Activated naive CD4-positive, alpha-beta T cell treated with anti-CD3 and anti-CD28 coated beads for 36 hours (primary cell): ENCODE measurements at regions of chr19 and their contacts with region 1.

Region 1: DNA sequence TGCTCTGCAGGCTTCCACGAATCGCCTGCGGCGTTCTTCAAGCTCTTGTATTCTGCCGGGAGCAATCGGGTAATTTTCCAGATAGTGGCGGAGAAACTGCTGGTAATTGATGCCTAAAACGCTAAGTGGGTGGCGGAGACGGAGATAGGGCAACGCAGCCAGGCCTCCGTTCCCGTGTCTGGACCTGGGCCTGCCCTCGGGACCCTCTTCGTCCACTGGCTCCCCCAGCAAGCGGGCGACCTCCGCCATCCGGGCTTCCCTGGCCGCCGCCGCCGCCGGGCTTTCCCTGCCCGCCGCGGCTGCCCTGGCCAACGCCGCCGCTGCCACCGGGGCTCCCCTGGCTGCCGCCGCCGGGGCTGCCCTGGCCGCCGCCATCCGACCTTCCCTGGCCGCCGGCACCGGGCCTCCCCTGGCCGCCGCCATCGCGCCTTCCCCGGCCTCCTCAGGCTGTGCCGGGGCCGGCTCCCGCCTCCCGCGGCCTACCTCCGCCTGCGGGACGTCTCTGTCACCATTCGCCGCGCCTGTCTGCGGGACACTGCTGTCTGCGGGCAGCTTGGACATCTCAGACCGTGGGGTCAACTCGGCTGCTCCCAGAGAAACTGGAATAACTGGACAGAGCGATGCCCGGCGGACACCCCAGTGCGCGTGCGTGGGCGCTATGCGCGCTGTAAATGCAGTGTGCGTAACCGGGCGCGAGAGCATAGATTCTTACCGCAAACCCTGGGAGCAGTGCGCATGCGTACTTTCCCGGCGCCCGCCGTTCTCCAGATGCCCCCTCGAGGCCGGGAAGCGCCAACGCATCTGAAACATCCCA is at the start of gene EID2:
- DNase-seq: peak; percentile 97
- H3K4me3 Mint-ChIP-seq: peak within 1 kb of the TSS; percentile 93
- H3K27ac Mint-ChIP-seq: peak within 1 kb of the TSS; percentile 97
- H3K4me1 Mint-ChIP-seq: peaks cover 61% of the 10 kb centered on the region
- H3K27me3 Mint-ChIP-seq: no peaks in the 10 kb centered on the region
- total RNA-seq, gene EID2: 7.7 to 9.1 TPM

Region 2: DNA sequence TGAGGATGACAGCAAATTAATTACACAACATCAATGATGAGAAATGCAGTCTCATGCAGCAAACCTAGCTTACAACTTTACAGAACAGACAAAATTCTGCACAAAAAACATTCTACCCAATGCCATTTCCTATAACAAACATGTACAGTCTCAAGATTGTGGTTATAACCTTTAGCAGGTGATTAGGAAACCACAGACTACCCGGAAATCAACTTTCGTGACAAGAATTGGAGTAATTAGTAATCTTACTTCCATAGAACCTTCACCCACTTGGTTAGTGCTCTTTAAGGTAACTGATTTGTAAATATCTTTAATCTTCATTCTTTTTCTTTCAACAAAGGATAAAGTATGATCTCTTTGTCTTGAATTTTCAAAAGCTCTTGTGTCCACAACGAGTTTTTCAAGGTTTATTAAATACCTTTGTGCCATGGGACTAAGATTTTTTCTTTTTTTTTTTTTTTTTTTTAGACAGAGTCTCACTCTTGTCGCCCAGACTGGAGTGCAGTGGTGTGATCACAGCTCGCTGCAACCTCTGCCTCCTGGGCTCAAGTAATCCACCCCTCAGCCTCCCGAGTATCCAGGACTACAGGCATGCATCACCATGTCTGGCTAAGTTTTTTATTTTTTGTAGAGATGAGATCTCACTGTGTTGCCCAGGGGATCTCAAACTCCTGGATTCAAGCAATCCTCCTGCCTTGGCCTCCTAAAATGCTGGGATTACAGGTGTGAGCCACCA is 1000.8 kb before region 1 on chr19:
- CTCF ChIA-PET with region 1: no interaction called
- intact Hi-C with region 1: no loop called
- DNase-seq: peak; percentile 61
- H3K4me3 Mint-ChIP-seq: peak overlapping the region; percentile 14
- H3K27ac Mint-ChIP-seq: peak overlapping the region; percentile 85
- H3K4me1 Mint-ChIP-seq: peaks cover 35% of the 10 kb centered on the region
- H3K27me3 Mint-ChIP-seq: no peaks in the 10 kb centered on the region

Region 3: GRCh38 chr19:39335168-39335548 is 204.6 kb before region 1 on chr19:
- CTCF ChIA-PET with region 1: no interaction called
- intact Hi-C with region 1: loop called (anchors 5 kb)
- DNase-seq: peak; percentile 57
- H3K4me3 Mint-ChIP-seq: peak overlapping the region; percentile 95
- H3K27ac Mint-ChIP-seq: peak overlapping the region; percentile 99
- H3K4me1 Mint-ChIP-seq: peaks cover 65% of the 10 kb centered on the region
- H3K27me3 Mint-ChIP-seq: no peaks in the 10 kb centered on the region

Region 4: GRCh38 chr19:39557441-39558151 is 17.9 kb after region 1 on chr19:
- CTCF ChIA-PET with region 1: no interaction called
- intact Hi-C with region 1: no loop called
- DNase-seq: no peak
- H3K4me3 Mint-ChIP-seq: peak overlapping the region; percentile 57
- H3K27ac Mint-ChIP-seq: peak overlapping the region; percentile 79
- H3K4me1 Mint-ChIP-seq: peaks cover 24% of the 10 kb centered on the region
- H3K27me3 Mint-ChIP-seq: no peaks in the 10 kb centered on the region